ENCODE measurements at regions of chr19 and their contacts with region 1.

Region 1: DNA sequence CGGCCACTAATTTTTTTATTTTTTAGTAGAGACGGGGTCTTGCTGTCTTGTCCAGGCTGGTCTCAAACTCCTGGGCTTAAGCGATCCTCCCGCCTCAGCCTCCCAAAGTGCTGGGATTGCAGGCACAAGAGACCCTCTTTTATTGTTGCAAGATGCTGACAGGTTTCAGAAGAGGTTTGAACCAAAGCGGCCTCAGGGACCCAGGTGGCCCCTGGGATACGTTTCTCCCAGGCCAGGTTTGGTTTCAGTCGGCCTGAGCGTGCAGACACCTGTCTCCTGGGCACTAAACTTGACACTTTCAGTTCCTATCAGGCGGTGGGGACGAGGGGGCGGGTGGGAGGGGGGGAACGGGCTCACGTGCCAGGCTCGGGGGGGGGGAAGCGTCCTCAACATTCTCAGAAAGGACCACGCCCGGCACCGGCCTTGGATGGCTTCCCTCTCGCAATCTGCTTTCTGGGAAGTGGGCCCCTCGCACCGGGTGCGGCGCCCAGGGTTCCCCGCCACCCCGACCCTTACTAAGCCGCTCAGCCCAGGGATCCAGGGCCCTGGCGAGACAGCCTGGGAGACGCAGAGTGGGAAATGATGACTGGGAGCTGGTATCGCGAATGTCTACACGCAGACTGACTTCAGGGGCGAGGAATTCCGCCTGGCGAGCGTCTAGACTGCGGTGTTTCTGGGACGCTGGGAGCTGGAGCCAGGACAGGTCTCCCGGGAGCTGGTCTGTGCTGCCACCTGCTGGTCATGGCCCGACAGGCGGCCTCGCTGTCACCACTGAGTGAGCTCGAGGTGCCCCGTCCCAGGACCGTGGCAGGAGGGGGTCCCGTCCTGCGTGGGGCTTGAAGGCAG is 91.6 kb downstream of the GNG7 start:
- DNase-seq: peak; percentile 96
- H3K4me3 Mint-ChIP-seq: peak overlapping the region; percentile 87
- H3K27ac Mint-ChIP-seq: peak overlapping the region; percentile 38
- H3K4me1 Mint-ChIP-seq: peaks cover 37% of the 10 kb centered on the region
- H3K27me3 Mint-ChIP-seq: peaks cover 13% of the 10 kb centered on the region

Region 2: DNA sequence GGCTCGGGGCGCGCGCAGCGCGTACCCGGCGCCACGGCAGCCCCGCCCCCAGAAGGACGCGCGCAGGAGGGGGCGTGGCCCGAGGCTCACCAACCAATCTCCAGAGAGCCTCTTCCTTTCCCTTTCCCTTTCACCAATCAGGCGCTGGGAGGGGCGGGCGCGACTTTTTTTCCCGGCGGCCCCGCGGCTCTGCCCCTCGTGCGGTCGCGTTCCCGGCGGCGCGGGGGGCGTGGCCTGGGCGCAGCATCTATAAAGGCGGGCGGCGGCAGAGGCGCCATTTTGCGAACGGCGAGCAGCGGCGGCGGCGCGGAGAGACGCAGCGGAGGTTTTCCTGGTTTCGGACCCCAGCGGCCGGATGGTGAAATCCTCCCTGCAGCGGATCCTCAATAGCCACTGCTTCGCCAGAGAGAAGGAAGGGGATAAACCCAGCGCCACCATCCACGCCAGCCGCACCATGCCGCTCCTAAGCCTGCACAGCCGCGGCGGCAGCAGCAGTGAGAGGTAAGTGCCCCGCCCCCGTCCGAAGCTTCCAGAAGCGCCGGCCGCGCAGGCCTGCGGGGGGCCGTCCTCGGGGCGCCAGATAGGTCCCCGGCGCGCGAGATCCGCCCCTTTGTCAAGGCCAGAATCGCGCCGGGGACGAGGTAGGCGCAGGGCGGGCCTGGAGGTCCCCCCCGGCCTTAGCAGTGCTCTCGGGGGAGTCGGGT is 341.5 kb before region 1 on chr19:
- intact Hi-C with region 1: loop called (anchors 5 kb)
- DNase-seq: peak; percentile 100
- H3K4me3 Mint-ChIP-seq: peak overlapping the region; percentile 93
- H3K27ac Mint-ChIP-seq: peak overlapping the region; percentile 91
- H3K4me1 Mint-ChIP-seq: peaks cover 31% of the 10 kb centered on the region
- H3K27me3 Mint-ChIP-seq: no peaks in the 10 kb centered on the region

Region 3: DNA sequence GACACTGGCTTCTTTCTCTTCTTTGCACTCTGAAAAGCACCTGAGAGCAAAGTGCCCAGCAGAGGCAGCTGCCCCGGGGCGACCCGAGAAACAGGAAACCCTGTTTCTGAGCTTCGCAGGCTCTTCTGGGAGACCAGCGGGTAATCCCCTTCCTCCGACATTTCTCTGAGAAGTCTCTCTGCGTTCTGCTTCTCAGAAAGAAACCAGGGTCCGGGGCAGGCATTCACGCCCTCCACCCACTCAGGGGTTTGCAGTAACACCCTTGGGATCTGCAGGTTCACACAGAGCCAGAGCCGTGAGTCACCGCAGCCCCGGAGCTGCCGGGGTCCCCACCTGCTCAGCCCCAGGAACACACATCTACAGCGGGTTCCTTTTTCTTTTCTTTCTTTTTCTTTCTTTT is 49.0 kb before region 1 on chr19:
- intact Hi-C with region 1: loop called (anchors 2 kb)
- DNase-seq: peak; percentile 93
- H3K4me3 Mint-ChIP-seq: peak overlapping the region; percentile 83
- H3K27ac Mint-ChIP-seq: peak overlapping the region; percentile 87
- H3K4me1 Mint-ChIP-seq: peaks cover 37% of the 10 kb centered on the region
- H3K27me3 Mint-ChIP-seq: no peaks in the 10 kb centered on the region

Region 4: DNA sequence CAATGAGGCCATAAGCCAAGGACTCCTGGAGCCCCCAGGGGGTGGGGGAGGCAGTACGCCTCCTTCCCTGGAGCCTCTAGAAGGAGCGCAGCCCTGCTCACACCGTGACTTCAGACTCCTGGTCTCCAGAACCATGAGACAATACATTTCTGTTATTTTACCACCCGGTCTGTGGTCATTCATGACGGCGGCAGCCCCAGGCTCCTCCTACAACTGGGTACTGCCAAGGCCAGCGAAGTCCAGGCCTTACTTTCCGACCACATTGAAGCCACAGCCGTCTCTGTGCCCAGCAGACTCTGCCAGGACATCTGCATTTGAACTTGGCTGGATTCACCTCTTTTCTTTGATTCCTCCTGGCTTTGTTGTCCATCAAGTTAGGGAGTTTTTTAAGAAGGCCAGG is 81.1 kb after region 1 on chr19:
- intact Hi-C with region 1: no loop called
- DNase-seq: no peak
- H3K4me3 Mint-ChIP-seq: no peak overlapping the region
- H3K27ac Mint-ChIP-seq: no peak overlapping the region
- H3K4me1 Mint-ChIP-seq: no peaks in the 10 kb centered on the region
- H3K27me3 Mint-ChIP-seq: no peaks in the 10 kb centered on the region